Gastrocnemius medialis (tissue), 4 donors: ENCODE measurements at regions of chr2 and their contacts with region 1.

Region 1: DNA sequence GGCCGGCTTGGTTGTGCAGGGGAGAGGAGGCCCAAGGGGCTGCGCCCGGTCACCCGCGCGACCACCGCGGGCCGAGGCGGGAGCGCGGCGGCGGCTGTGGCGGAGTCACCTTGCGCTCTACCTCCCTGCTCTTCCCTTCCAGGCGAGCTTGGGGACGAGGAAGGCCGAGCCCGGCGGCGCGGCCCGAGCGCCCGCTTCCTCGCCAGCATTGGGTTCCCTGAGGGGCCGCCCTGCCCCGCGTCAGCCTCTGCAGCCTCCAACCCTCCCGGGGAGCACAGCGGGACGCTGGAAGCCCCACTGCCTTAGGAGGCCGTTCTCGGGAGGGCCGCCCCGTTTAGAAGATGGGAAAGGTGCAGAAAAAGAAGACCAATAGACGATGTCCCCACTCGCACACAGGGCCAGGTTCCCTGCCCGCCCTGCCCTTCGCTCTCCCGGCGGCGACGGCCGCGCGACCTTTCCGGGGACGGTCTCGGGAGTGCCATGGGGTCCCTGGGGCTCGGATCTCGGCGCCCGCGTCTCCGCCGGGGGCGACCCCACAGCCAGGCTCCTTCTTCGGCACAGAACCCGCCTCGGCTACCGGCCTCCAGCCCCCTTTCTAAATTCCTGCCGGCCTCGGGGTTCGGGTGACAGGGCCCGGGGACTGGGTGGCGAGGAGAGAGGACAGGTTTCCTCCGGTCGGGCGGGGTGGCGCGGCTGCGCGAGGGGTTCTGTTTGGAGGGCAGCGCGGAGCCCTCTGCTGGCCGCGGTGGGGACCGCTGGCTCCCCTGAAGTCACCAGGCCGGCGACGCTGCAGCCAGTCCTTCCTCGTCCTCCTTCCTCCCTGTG is 85.5 kb downstream of the HS6ST1 start:
- DNase-seq: peak; percentile 68 to 81
- ATAC-seq: peak; percentile 91 to 93
- H3K4me3 ChIP-seq: peak overlapping the region; percentile 75 to 89 (median 82)
- H3K27ac ChIP-seq: peak overlapping the region; percentile 88 to 92 (median 92)
- H3K4me1 ChIP-seq: peaks cover 8 to 10% of the 10 kb centered on the region in 2 donors
- H3K27me3 ChIP-seq: no peaks in the 10 kb centered on the region
- CTCF ChIP-seq: peak; percentile 87 to 95 (median 92)
- POLR2A ChIP-seq: no peak

Region 2: GRCh38 chr2:128172191-128172590 is 61.0 kb before region 1 on chr2:
- in situ Hi-C with region 1: loop called in 2 of 4 experiments (anchors 5 kb)
- intact Hi-C with region 1: no loop called
- DNase-seq: no peak
- ATAC-seq: no peak
- H3K4me3 ChIP-seq: no peak overlapping the region
- H3K27ac ChIP-seq: no peak overlapping the region
- H3K4me1 ChIP-seq: no peaks in the 10 kb centered on the region
- H3K27me3 ChIP-seq: no peaks in the 10 kb centered on the region
- CTCF ChIP-seq: peak in 1 of 5 experiments; percentile 15
- POLR2A ChIP-seq: no peak

Region 3: DNA sequence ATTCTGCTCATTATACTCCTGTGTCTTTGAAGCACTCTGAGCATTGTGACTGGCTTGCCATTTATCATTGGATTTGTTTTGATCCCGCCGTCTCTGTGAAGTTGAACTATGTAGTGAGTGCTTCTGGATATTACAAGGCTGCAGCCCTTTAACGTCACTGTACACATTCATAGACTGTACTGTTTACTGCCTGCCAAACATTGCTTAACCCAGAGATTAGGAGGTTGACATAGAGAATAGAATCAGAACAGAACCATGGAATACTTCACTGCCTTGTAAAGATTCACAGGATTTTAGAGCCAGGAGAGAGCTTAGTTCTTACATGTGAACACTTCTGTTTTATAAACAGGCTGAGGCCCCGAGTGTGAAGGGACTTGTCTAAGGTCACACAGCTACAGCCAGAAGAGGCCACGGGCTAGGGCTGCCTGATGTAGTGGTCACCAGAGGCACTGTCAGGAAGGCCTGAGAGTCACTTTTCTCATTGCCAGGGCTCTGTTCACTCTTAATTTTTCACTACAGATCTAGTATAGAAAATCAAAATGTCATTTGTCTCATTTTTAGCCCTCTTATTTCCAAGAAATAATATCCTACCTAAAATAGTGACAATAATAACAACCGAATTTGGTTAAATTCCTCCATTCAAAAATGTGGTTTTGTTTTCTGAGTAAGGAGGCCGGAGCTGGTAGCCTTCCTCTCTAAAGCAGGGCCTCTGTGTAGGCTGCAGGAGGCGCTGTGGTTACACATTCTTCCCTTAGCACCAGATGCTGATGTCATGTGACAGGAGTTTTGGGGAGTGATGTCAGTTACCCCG is 54.3 kb before region 1 on chr2:
- in situ Hi-C with region 1: loop called in 3 of 4 experiments (anchors 5 to 10 kb)
- intact Hi-C with region 1: loop called (anchors 1 kb)
- DNase-seq: peak; percentile 26 to 56
- ATAC-seq: peak; percentile 85 to 88
- H3K4me3 ChIP-seq: no peak overlapping the region
- H3K27ac ChIP-seq: peak overlapping the region in 2 of 4 donors; percentile 21 to 43
- H3K4me1 ChIP-seq: peaks cover 6 to 7% of the 10 kb centered on the region in 2 donors
- H3K27me3 ChIP-seq: no peaks in the 10 kb centered on the region
- CTCF ChIP-seq: peak; percentile 72 to 80 (median 79)
- POLR2A ChIP-seq: no peak

Region 4: GRCh38 chr2:128187032-128187654 is 46.0 kb before region 1 on chr2:
- in situ Hi-C with region 1: loop called in 1 of 4 experiments (anchors 10 kb)
- intact Hi-C with region 1: loop called (anchors 2 kb)
- DNase-seq: peak; percentile 66 to 75
- ATAC-seq: peak; percentile 98
- H3K4me3 ChIP-seq: peak overlapping the region; percentile 38 to 54 (median 52)
- H3K27ac ChIP-seq: peak overlapping the region; percentile 84 to 92 (median 86)
- H3K4me1 ChIP-seq: peaks cover 7 to 18% of the 10 kb centered on the region in 2 donors
- H3K27me3 ChIP-seq: no peaks in the 10 kb centered on the region
- CTCF ChIP-seq: no peak
- POLR2A ChIP-seq: peak; percentile 19 to 37

Region 5: GRCh38 chr2:128196471-128196931 is 36.7 kb before region 1 on chr2:
- in situ Hi-C with region 1: no loop called
- intact Hi-C with region 1: loop called (anchors 2 kb)
- DNase-seq: no peak
- ATAC-seq: no peak
- H3K4me3 ChIP-seq: no peak overlapping the region
- H3K27ac ChIP-seq: no peak overlapping the region
- H3K4me1 ChIP-seq: peaks cover 32 to 37% of the 10 kb centered on the region in 2 donors
- H3K27me3 ChIP-seq: no peaks in the 10 kb centered on the region
- CTCF ChIP-seq: no peak
- POLR2A ChIP-seq: no peak